PC-9 (cell line): ENCODE measurements at regions of chrX and their contacts with region 1.

Region 1: DNA sequence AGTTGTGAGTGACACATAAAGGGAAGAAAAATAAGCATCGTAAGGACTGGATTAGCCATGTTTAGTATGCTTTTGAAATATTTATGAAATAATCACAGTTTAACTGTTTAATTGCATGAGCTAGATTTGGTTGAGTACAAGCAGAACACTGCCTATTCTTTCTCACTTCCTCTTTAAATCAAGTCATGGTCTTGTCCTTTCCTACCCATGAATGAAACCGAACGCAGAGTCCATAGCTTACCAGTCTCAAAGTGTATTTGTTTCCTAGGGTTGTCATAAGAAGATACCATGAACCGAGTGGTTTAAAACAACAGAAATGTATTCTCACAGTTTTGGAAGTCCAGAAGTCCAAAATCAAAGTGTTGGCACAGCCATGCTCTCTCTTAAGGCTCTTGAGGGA is 684.0 kb upstream of the MAGEB2 start:
- DNase-seq: no peak
- H3K4me3 ChIP-seq: no peak overlapping the region
- H3K27ac ChIP-seq: no peak overlapping the region
- H3K4me1 ChIP-seq: no peaks in the 10 kb centered on the region
- H3K27me3 ChIP-seq: no peaks in the 10 kb centered on the region
- CTCF ChIP-seq: no peak

Region 2: GRCh38 chrX:29652484-29652883 is 121.1 kb after region 1 on chrX:
- CTCF ChIA-PET with region 1: no interaction called
- POLR2A ChIA-PET with region 1: no interaction called
- intact Hi-C with region 1: loop called (anchors 10 kb)
- DNase-seq: peak in 1 of 2 experiments; percentile 9
- H3K4me3 ChIP-seq: no peak overlapping the region
- H3K27ac ChIP-seq: no peak overlapping the region
- H3K4me1 ChIP-seq: no peaks in the 10 kb centered on the region
- H3K27me3 ChIP-seq: no peaks in the 10 kb centered on the region
- CTCF ChIP-seq: no peak